Activated CD4-positive, alpha-beta T cell treated with anti-CD3 and anti-CD28 coated beads for 36 hours (primary cell): ENCODE measurements at regions of chr6 and their contacts with region 1.

Region 1: GRCh38 chr6:111764238-111765175 is 108.7 kb downstream of the FYN start:
- DNase-seq: peak; percentile 77
- ATAC-seq: peak; percentile 53
- H3K4me3 Mint-ChIP-seq: peak overlapping the region; percentile 68
- H3K27ac Mint-ChIP-seq: peak overlapping the region; percentile 99
- H3K4me1 Mint-ChIP-seq: peaks cover 99% of the 10 kb centered on the region
- H3K27me3 Mint-ChIP-seq: no peaks in the 10 kb centered on the region

Region 2: GRCh38 chr6:111709615-111710398 is 54.7 kb before region 1 on chr6:
- CTCF ChIA-PET with region 1: interaction called, 18 read pairs
- POLR2A ChIA-PET with region 1: interaction called, 6 read pairs
- intact Hi-C with region 1: loop called (anchors 2 to 5 kb)
- DNase-seq: peak; percentile 73
- ATAC-seq: peak; percentile 81
- H3K4me3 Mint-ChIP-seq: no peak overlapping the region
- H3K27ac Mint-ChIP-seq: peak overlapping the region; percentile 88
- H3K4me1 Mint-ChIP-seq: peaks cover 58% of the 10 kb centered on the region
- H3K27me3 Mint-ChIP-seq: no peaks in the 10 kb centered on the region

Region 3: GRCh38 chr6:111776236-111777221 is 12.0 kb after region 1 on chr6:
- CTCF ChIA-PET with region 1: interaction called, 8 read pairs
- POLR2A ChIA-PET with region 1: interaction called, 8 read pairs
- intact Hi-C with region 1: loop called in 1 of 2 experiments (anchors 1 kb)
- DNase-seq: no peak
- ATAC-seq: peak; percentile 28
- H3K4me3 Mint-ChIP-seq: no peak overlapping the region
- H3K27ac Mint-ChIP-seq: peak overlapping the region; percentile 83
- H3K4me1 Mint-ChIP-seq: peaks cover 92% of the 10 kb centered on the region
- H3K27me3 Mint-ChIP-seq: no peaks in the 10 kb centered on the region

Region 4: DNA sequence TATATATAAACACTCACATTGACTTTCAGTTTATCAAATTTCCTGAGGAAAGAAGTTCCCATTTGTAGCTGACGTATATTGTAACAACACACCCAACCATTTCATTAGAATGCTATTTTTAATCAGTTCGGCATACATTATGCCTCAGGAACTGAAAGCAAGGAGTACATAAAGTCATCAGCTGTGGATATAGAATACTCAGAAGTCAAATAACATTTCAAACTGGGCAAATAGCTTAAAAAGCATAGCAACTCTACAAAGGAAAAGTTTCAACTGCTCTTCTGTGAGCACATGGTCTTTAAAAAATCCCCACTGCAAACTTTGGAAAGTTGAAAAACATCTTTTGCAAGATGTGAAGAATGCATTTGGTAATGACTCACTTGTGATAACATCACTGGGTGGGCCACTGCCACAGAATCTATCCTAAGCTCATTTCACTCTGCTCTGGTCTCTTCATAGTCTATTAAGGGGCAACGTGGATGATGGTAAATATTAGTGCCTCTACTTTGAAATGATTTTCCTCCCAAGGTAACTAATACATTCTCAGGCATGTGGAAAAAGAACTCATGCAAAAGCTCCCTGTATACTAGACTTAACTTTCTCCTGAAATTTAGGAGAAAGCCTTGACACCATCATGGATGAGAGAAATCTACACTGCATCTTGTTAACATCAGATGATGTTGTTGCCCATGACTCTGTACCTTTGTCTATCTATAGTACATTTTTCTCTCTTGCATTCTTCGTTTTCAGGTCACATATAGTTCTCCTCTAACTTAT is 59.5 kb after region 1 on chr6:
- CTCF ChIA-PET with region 1: interaction called, 11 read pairs
- POLR2A ChIA-PET with region 1: interaction called, 15 read pairs
- intact Hi-C with region 1: no loop called
- DNase-seq: peak; percentile 49
- ATAC-seq: peak; percentile 64
- H3K4me3 Mint-ChIP-seq: peak overlapping the region; percentile 63
- H3K27ac Mint-ChIP-seq: peak overlapping the region; percentile 97
- H3K4me1 Mint-ChIP-seq: peaks cover 89% of the 10 kb centered on the region
- H3K27me3 Mint-ChIP-seq: no peaks in the 10 kb centered on the region

Region 5: GRCh38 chr6:111873178-111874024 is 108.9 kb after region 1 on chr6 and contains the start of gene FYN:
- CTCF ChIA-PET with region 1: interaction called, 7 read pairs
- POLR2A ChIA-PET with region 1: interaction called, 4 read pairs
- intact Hi-C with region 1: loop called (anchors 1 to 2 kb)
- DNase-seq: peak; percentile 100
- ATAC-seq: peak; percentile 87
- H3K4me3 Mint-ChIP-seq: peak within 1 kb of the TSS; percentile 98
- H3K27ac Mint-ChIP-seq: peak within 1 kb of the TSS; percentile 91
- H3K4me1 Mint-ChIP-seq: peaks cover 35% of the 10 kb centered on the region
- H3K27me3 Mint-ChIP-seq: no peaks in the 10 kb centered on the region
- total RNA-seq, gene FYN: 345 to 504 TPM

Region 6: DNA sequence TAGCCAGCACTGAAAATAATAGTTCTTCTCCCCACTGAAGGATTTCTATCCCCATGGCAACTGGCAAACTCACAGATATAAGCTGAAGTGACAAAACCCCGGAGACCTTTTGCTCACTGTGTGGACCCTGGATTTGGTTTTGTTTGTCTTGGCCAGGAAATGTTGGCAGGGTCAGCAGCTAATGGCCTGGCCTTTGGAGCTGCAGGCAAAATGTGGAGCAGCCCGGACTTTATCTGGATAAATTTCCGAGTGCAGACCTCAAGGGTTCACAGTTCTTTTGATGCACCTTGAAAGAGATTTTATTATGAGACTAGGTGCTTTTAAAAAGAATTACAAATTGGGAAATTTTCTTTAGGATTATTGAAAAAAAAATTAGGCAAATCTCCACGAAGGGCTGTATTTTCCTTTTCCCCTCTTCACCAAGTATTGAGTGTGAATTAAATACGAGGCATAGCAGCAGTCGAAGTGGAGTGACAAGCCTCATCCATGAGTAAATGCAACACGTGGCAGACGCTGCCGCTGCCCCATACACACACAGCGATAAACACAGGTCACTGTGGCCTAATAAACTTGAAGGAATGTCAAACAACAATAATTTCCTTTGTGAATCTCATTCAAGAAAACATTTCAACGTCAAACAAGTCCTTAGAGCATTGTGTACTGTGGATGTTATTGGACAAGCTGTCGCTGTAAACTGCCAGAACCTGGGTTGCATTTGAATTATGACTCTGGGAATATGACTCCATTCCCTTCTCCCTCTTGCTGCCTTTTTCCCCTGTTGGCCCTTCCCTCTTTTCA is 254.3 kb after region 1 on chr6:
- CTCF ChIA-PET with region 1: interaction called, 3 read pairs
- POLR2A ChIA-PET with region 1: interaction called, 4 read pairs
- intact Hi-C with region 1: loop called in 1 of 2 experiments (anchors 2 kb)
- DNase-seq: no peak
- ATAC-seq: no peak
- H3K4me3 Mint-ChIP-seq: no peak overlapping the region
- H3K27ac Mint-ChIP-seq: peak overlapping the region; percentile 43
- H3K4me1 Mint-ChIP-seq: peaks cover 78% of the 10 kb centered on the region
- H3K27me3 Mint-ChIP-seq: no peaks in the 10 kb centered on the region

Region 7: GRCh38 chr6:112665815-112666214 is 901.3 kb after region 1 on chr6:
- CTCF ChIA-PET with region 1: no interaction called
- POLR2A ChIA-PET with region 1: no interaction called
- intact Hi-C with region 1: no loop called
- DNase-seq: no peak
- ATAC-seq: no peak
- H3K4me3 Mint-ChIP-seq: no peak overlapping the region
- H3K27ac Mint-ChIP-seq: no peak overlapping the region
- H3K4me1 Mint-ChIP-seq: no peaks in the 10 kb centered on the region
- H3K27me3 Mint-ChIP-seq: no peaks in the 10 kb centered on the region